MCF 10A (cell line): ENCODE measurements at regions of chr14 and their contacts with region 1.

Region 1: DNA sequence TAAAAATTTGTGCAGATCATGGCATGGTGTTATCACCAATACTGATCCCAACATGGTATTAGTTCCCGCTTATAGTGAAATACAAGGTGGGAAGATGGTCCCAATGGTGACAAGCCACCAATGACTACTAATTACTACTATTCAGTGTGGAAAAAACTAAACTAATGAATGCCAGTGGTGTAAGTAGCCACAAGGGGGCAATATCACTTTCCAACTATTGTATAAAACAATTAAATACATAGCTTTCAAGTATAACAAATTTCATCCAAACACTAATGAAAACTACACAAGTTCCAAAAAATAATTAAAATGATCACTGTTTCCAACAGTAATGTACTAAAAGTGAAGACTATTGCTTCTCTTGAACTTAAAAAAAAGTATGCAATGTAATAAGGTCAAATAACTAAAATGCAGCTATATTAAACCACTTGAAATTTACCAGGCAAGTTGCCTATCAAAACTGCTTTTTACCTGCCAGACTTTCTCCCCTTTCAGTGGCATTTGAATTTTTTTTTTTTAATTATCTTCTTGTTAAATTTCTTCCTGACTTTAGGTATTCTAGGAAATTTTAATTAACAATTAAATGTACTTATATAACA is 58.0 kb downstream of the PAPLN start:
- DNase-seq: peak; percentile 52
- H3K4me3 Mint-ChIP-seq: no peak overlapping the region
- H3K27ac Mint-ChIP-seq: no peak overlapping the region
- H3K4me1 Mint-ChIP-seq: no peaks in the 10 kb centered on the region
- H3K27me3 Mint-ChIP-seq: no peaks in the 10 kb centered on the region
- CTCF ChIP-seq: peak; percentile 52

Region 2: DNA sequence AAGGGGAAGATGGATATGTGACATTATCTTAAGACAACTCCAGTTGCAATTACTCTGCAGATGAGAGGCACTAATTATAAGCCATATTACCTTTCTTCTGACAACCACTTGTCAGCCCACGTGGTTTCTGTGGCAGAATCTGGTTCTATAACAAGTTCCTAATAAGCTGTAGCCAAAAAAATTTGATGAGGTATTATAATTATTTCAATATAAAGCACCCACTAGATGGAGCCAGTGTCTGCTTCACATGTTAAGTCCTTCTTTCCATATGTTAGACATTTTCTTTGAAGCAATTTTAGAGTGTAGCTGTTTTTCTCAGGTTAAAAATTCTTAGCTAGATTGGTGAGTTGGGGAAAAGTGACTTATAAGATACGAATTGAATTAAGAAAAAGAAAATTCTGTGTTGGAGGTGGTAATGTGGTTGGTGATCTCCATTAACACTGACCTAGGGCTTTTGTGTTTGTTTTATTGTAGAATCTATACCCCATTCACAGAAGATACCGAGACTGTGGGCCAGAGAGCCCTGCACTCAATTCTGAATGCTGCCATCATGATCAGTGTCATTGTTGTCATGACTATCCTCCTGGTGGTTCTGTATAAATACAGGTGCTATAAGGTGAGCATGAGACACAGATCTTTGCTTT is 122.1 kb before region 1 on chr14:
- CTCF ChIA-PET with region 1: interaction called, 3 read pairs
- POLR2A ChIA-PET with region 1: no interaction called
- intact Hi-C with region 1: loop called (anchors 5 kb)
- DNase-seq: peak; percentile 60
- H3K4me3 Mint-ChIP-seq: no peak overlapping the region
- H3K27ac Mint-ChIP-seq: no peak overlapping the region
- H3K4me1 Mint-ChIP-seq: no peaks in the 10 kb centered on the region
- H3K27me3 Mint-ChIP-seq: no peaks in the 10 kb centered on the region
- CTCF ChIP-seq: peak; percentile 59

Region 3: GRCh38 chr14:73311708-73312030 is 16.4 kb after region 1 on chr14:
- CTCF ChIA-PET with region 1: interaction called, 21 read pairs
- POLR2A ChIA-PET with region 1: interaction called, 3 read pairs
- intact Hi-C with region 1: no loop called
- DNase-seq: no peak
- H3K4me3 Mint-ChIP-seq: no peak overlapping the region
- H3K27ac Mint-ChIP-seq: peak overlapping the region; percentile 71
- H3K4me1 Mint-ChIP-seq: peaks cover 5% of the 10 kb centered on the region
- H3K27me3 Mint-ChIP-seq: no peaks in the 10 kb centered on the region
- CTCF ChIP-seq: no peak

Region 4: GRCh38 chr14:73463411-73463810 is 168.1 kb after region 1 on chr14:
- CTCF ChIA-PET with region 1: interaction called, 14 read pairs
- POLR2A ChIA-PET with region 1: interaction called, 5 read pairs
- intact Hi-C with region 1: no loop called
- DNase-seq: peak; percentile 98
- H3K4me3 Mint-ChIP-seq: peak overlapping the region; percentile 28
- H3K27ac Mint-ChIP-seq: peak overlapping the region; percentile 77
- H3K4me1 Mint-ChIP-seq: peaks cover 36% of the 10 kb centered on the region
- H3K27me3 Mint-ChIP-seq: no peaks in the 10 kb centered on the region
- CTCF ChIP-seq: no peak

Region 5: GRCh38 chr14:73477618-73478266 is 182.4 kb after region 1 on chr14:
- CTCF ChIA-PET with region 1: interaction called, 79 read pairs
- POLR2A ChIA-PET with region 1: interaction called, 13 read pairs
- intact Hi-C with region 1: loop called (anchors 1 kb)
- DNase-seq: peak; percentile 63
- H3K4me3 Mint-ChIP-seq: no peak overlapping the region
- H3K27ac Mint-ChIP-seq: no peak overlapping the region
- H3K4me1 Mint-ChIP-seq: peaks cover 7% of the 10 kb centered on the region
- H3K27me3 Mint-ChIP-seq: no peaks in the 10 kb centered on the region
- CTCF ChIP-seq: no peak